ENCODE measurements at regions of chr16 and their contacts with region 1.

Region 1: GRCh38 chr16:234468-235305 is at the start of gene FAM234A:
- DNase-seq: peak; percentile 96
- H3K4me3 ChIP-seq: peak within 1 kb of the TSS; percentile 73 to 98
- H3K27ac ChIP-seq: peak within 1 kb of the TSS; percentile 92 to 98
- H3K4me1 ChIP-seq: no peaks in the 10 kb centered on the region; a peak in 1 of 4 replicates
- H3K27me3 ChIP-seq: no peaks in the 10 kb centered on the region
- CTCF ChIP-seq: peak; percentile 58
- EP300 ChIP-seq: no peak; a peak in 1 of 4 replicates
- RAD21 ChIP-seq: no peak
- polyA plus RNA-seq, gene FAM234A: 91.3 and 126 TPM in 2 replicates

Region 2: GRCh38 chr16:268141-269053 is 33.7 kb after region 1 on chr16:
- CTCF ChIA-PET with region 1: no interaction called
- POLR2A ChIA-PET with region 1: no interaction called
- DNase-seq: no peak
- H3K4me3 ChIP-seq: no peak overlapping the region
- H3K27ac ChIP-seq: no peak overlapping the region
- H3K4me1 ChIP-seq: peaks cover 0 to 8% of the 10 kb centered on the region in 2 experiments; a peak in 1 of 4 replicates
- H3K27me3 ChIP-seq: no peaks in the 10 kb centered on the region
- CTCF ChIP-seq: no peak
- EP300 ChIP-seq: no peak
- RAD21 ChIP-seq: no peak

Region 3: DNA sequence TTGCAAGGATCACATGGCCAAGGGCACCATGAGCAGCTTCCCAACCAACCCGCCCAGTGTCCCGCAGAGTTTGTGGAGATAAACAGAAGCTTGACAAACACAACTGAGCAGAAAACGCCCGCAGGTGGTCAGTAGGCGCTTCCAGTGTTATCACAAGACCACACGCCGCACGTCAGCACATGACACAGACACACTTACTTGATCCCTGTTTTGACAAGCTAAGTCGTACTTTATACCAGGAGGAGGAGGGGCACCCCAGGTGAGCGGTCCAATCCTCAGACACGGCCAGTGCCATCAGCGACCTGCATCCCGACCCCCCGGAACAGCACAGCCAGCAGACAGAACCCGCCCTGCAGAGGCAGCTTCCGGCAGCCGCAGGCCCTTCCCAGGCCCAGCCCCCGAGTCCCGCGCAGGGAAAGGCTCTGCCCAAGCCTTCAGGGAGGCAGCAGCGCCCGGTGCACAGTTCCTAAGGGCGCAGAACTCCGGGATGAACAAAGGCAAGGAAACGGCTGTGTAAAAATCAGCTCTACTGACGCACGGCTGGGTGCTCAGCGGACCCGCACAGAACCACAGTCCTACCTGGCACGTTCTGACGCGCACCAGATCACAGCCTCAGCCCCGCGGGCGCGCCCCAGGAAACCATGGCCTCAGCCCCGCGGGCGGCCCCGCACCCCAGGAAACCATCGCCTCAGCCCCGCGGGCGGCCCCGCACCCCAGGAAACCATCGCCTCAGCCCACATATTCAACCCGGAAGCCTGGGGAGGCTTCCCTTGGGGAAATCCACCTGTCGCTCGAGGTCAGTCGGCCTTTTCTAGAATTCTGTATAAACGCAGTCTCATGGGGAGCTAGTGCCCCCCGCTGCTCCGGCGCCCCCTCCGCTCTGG is 90.0 kb after region 1 on chr16:
- CTCF ChIA-PET with region 1: no interaction called
- POLR2A ChIA-PET with region 1: no interaction called
- DNase-seq: no peak
- H3K4me3 ChIP-seq: no peak overlapping the region
- H3K27ac ChIP-seq: no peak overlapping the region
- H3K4me1 ChIP-seq: peaks cover 5 to 16% of the 10 kb centered on the region in 2 experiments; a peak in 2 of 4 replicates
- H3K27me3 ChIP-seq: no peaks in the 10 kb centered on the region
- CTCF ChIP-seq: no peak
- EP300 ChIP-seq: no peak
- RAD21 ChIP-seq: no peak

Region 4: DNA sequence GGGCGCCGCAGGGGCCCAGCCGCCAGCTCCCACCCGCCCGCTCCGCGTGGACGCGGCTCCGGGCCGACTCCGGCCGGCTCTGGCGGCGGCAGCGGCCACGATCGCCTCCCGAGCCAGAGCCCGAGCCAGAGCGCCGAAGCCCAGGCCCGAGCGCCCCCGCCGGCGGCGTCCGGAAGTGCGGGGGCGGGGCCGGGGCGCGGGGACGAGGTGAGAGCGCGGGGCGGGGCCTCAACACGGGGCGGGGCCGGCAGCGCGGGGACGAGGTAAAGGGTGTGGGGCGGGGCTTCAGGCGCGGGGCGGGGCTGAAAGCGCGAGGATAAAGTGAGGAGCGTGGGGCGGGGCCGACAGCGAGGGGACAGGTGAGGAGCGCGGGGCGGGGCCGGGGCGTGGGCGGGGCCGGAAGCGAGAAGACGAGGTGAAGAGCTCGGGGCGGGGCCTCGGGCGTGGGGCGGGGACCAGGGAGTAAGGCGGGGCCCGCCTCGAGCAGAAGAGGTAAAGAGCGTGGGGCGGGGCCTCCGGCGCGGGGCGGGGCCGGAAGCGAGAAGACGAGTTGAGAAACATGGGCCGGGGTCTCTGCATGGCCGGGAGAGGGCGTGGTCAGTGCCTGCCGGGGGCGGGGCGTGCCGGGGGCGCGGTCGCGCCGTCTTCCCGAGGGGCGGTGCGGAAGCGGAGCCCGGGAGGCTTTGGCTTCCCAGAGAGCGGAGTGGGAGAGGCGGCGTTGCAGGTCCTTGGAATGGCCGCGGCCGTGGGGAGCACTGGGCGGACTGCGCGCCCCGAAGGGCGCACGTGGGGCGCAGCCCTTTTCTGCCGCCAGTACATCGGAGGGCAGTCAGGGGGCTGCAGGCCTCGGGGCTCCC is 118.1 kb after region 1 on chr16 and contains the start of gene AXIN1:
- CTCF ChIA-PET with region 1: interaction called, 21 read pairs
- POLR2A ChIA-PET with region 1: no interaction called
- DNase-seq: peak; percentile 97
- H3K4me3 ChIP-seq: peak within 1 kb of the TSS; percentile 61 to 92
- H3K27ac ChIP-seq: peak within 1 kb of the TSS in 1 of 2 experiments; percentile 41; a peak in 2 of 4 replicates
- H3K4me1 ChIP-seq: peaks cover 0 to 4% of the 10 kb centered on the region in 2 experiments; a peak in 2 of 4 replicates
- H3K27me3 ChIP-seq: no peaks in the 10 kb centered on the region
- CTCF ChIP-seq: peak; percentile 38; the same call in 1 of the 2 replicates
- EP300 ChIP-seq: no peak
- RAD21 ChIP-seq: peak; percentile 60
- polyA plus RNA-seq, gene AXIN1: 12.5 and 19.9 TPM in 2 replicates

Region 5: DNA sequence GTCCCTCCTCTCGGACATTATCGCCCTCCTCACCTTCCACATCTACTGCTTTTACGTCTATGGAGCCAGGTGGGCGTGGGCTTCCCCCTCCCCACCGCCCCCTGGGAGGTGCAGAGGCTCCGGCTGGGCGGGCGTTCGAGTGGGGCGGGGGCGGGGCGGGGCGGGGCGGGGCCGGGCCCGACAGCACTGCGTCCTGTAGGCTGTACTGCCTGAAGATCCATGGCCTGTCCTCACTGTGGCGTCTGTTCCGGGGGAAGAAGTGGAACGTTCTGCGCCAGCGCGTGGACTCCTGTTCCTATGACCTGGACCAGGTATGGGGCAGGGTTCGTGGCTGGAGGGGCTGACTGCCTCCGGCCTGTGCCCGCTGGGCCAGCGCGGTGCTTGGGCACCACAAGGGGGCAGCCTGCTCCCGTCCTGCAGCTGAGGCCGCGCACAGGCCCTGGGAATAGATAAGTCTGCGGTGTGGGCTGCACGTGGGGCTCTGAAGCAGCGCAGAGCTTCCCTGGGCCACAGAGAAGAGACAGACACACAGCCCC is 344.3 kb after region 1 on chr16:
- CTCF ChIA-PET with region 1: no interaction called
- POLR2A ChIA-PET with region 1: no interaction called
- DNase-seq: peak; percentile 77
- H3K4me3 ChIP-seq: no peak overlapping the region; a peak in 1 of 4 replicates
- H3K27ac ChIP-seq: no peak overlapping the region
- H3K4me1 ChIP-seq: no peaks in the 10 kb centered on the region
- H3K27me3 ChIP-seq: no peaks in the 10 kb centered on the region
- CTCF ChIP-seq: peak; percentile 46
- EP300 ChIP-seq: no peak
- RAD21 ChIP-seq: peak; percentile 46